Activated CD8-positive, alpha-beta T cell treated with anti-CD3 and anti-CD28 coated beads, Interleukin-2, amount 10 ng/mL, durations not matched to agents 7 days and 5 days (primary cell): ENCODE measurements at regions of chr6 and their contacts with region 1.

Region 1: GRCh38 chr6:90216072-90216977 is 80.3 kb downstream of the BACH2 start:
- DNase-seq: peak; percentile 59
- ATAC-seq: peak; percentile 25
- H3K4me3 Mint-ChIP-seq: peak overlapping the region; percentile 57
- H3K27ac Mint-ChIP-seq: no peak overlapping the region
- H3K4me1 Mint-ChIP-seq: peaks cover 25% of the 10 kb centered on the region
- H3K27me3 Mint-ChIP-seq: no peaks in the 10 kb centered on the region

Region 2: DNA sequence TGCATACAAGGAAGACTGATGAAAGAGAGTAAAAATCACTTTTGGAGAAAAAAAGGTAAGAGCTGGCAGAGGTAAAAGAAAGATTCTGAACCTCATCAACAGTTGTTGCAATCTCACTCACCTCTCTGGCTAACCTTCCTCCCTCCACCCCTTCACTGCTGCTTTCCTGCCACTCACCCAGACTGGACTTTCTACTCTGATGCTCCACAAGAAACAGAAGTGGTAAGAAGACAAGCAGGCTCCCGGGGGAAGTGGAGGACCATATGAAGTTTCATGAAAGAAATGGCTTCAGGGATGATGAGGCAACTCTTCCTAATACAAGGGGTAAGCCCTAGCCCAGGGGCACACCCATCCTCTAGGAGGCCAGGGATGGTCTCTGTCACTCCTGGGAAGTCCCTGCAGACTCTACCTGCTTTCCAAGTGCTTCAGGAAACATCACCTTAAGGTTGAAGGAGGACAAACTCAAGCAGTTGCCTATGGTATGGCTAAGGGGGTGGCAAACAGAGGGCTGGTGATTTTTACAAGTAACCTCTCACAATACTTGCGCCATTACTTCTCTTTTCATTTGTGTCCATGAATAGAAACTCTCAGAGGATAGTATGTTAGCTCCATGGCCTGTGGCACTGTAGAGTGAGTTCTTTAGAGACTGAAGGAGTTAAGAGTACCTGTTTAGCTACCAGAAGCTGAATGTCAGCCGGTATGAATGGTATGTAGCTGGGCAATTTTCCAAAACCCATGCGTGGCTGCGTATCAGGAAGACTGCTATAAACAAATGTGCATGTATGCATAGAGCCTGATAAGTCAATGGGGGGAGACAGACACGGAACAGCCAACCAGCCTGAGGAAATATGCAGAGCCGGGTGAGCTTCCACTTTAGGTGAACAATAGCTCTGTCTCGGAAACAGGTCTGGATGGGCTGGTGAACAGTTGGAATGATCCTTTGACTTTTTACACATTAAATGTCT is 31.7 kb before region 1 on chr6:
- CTCF ChIA-PET with region 1: interaction called, 12 read pairs
- POLR2A ChIA-PET with region 1: interaction called, 5 read pairs
- DNase-seq: no peak
- ATAC-seq: peak; percentile 16
- H3K4me3 Mint-ChIP-seq: peak overlapping the region; percentile 61
- H3K27ac Mint-ChIP-seq: peak overlapping the region; percentile 81
- H3K4me1 Mint-ChIP-seq: peaks cover 76% of the 10 kb centered on the region
- H3K27me3 Mint-ChIP-seq: no peaks in the 10 kb centered on the region

Region 3: GRCh38 chr6:90204327-90205056 is 11.8 kb before region 1 on chr6:
- CTCF ChIA-PET with region 1: interaction called, 34 read pairs
- POLR2A ChIA-PET with region 1: interaction called, 5 read pairs
- DNase-seq: no peak
- ATAC-seq: no peak
- H3K4me3 Mint-ChIP-seq: no peak overlapping the region
- H3K27ac Mint-ChIP-seq: no peak overlapping the region
- H3K4me1 Mint-ChIP-seq: peaks cover 68% of the 10 kb centered on the region
- H3K27me3 Mint-ChIP-seq: no peaks in the 10 kb centered on the region

Region 4: DNA sequence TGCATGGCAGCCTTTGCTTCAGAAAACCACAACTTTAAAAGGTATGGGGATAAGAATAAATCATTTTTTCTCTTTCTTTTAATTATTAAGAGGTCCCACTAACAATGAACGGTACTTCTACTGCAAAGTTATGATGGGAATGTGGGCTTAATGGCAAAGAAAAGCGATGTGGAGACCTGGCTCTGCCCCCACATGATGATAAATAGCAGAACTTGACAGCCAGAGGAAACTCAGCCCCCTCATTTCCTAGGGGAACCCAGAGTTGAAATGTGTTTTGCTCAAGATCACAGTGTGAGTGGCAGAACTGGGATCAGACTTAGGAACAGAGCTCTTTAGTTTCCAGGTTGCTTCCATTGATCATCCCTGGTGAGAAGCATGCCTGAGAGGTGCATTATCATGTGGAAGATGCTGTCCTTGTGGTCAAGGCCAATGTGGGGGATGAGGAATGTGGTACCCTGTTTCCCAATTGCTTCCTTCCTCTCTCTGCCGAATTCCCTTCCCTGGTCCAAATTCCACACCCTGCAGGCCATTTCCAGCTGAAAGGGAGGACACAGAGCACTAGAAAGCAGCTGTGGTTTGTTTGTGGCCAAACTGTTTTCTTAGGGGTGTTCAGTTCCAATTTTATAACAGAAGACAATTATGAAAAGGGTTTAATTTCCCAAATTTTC is 14.4 kb after region 1 on chr6:
- CTCF ChIA-PET with region 1: interaction called, 10 read pairs
- POLR2A ChIA-PET with region 1: interaction called, 14 read pairs
- DNase-seq: no peak
- ATAC-seq: no peak
- H3K4me3 Mint-ChIP-seq: peak overlapping the region; percentile 20
- H3K27ac Mint-ChIP-seq: peak overlapping the region; percentile 75
- H3K4me1 Mint-ChIP-seq: peaks cover 95% of the 10 kb centered on the region
- H3K27me3 Mint-ChIP-seq: no peaks in the 10 kb centered on the region